CD8-positive, alpha-beta T cell (primary cell): ENCODE measurements at regions of chr2 and their contacts with region 1.

Region 1: GRCh38 chr2:7427293-7428060 is 510.3 kb downstream of the RNF144A start:
- DNase-seq: peak in 4 of 9 experiments; percentile 11 to 83 (median 57)
- ATAC-seq: peak; percentile 46
- H3K4me3 ChIP-seq: no peak overlapping the region
- H3K4me3 Mint-ChIP-seq: no peak overlapping the region
- H3K27ac ChIP-seq: peak overlapping the region in 1 of 2 experiments; percentile 37
- H3K27ac Mint-ChIP-seq: peak overlapping the region; percentile 64
- H3K4me1 ChIP-seq: peaks cover 39% of the 10 kb centered on the region
- H3K4me1 Mint-ChIP-seq: peaks cover 49% of the 10 kb centered on the region
- H3K27me3 ChIP-seq: no peaks in the 10 kb centered on the region
- H3K27me3 Mint-ChIP-seq: no peaks in the 10 kb centered on the region
- CTCF ChIP-seq: peak; percentile 94

Region 2: GRCh38 chr2:6355886-6356761 is 1071.4 kb before region 1 on chr2:
- CTCF ChIA-PET with region 1: no interaction called
- POLR2A ChIA-PET with region 1: no interaction called
- intact Hi-C with region 1: no loop called
- DNase-seq: no peak
- ATAC-seq: no peak
- H3K4me3 ChIP-seq: no peak overlapping the region
- H3K4me3 Mint-ChIP-seq: no peak overlapping the region
- H3K27ac ChIP-seq: no peak overlapping the region
- H3K27ac Mint-ChIP-seq: no peak overlapping the region
- H3K4me1 ChIP-seq: no peaks in the 10 kb centered on the region
- H3K4me1 Mint-ChIP-seq: no peaks in the 10 kb centered on the region
- H3K27me3 ChIP-seq: no peaks in the 10 kb centered on the region
- H3K27me3 Mint-ChIP-seq: no peaks in the 10 kb centered on the region
- CTCF ChIP-seq: no peak

Region 3: GRCh38 chr2:6922201-6922685 is 505.2 kb before region 1 on chr2:
- CTCF ChIA-PET with region 1: no interaction called
- POLR2A ChIA-PET with region 1: no interaction called
- intact Hi-C with region 1: no loop called
- DNase-seq: peak in 2 of 9 experiments; percentile 32 to 51
- ATAC-seq: peak; percentile 30
- H3K4me3 ChIP-seq: no peak overlapping the region
- H3K4me3 Mint-ChIP-seq: no peak overlapping the region
- H3K27ac ChIP-seq: no peak overlapping the region
- H3K27ac Mint-ChIP-seq: no peak overlapping the region
- H3K4me1 ChIP-seq: peaks cover 69% of the 10 kb centered on the region
- H3K4me1 Mint-ChIP-seq: peaks cover 81% of the 10 kb centered on the region
- H3K27me3 ChIP-seq: no peaks in the 10 kb centered on the region
- H3K27me3 Mint-ChIP-seq: no peaks in the 10 kb centered on the region
- CTCF ChIP-seq: no peak

Region 4: GRCh38 chr2:7450188-7450832 is 22.8 kb after region 1 on chr2:
- CTCF ChIA-PET with region 1: interaction called, 25 read pairs
- POLR2A ChIA-PET with region 1: interaction called, 12 read pairs
- intact Hi-C with region 1: loop called in 1 of 2 experiments (anchors 2 kb)
- DNase-seq: peak in 6 of 9 experiments; percentile 41 to 90 (median 68)
- ATAC-seq: peak; percentile 80
- H3K4me3 ChIP-seq: no peak overlapping the region
- H3K4me3 Mint-ChIP-seq: peak overlapping the region; percentile 65
- H3K27ac ChIP-seq: peak overlapping the region; percentile 51 to 81
- H3K27ac Mint-ChIP-seq: peak overlapping the region; percentile 98
- H3K4me1 ChIP-seq: peaks cover 70% of the 10 kb centered on the region
- H3K4me1 Mint-ChIP-seq: peaks cover 85% of the 10 kb centered on the region
- H3K27me3 ChIP-seq: no peaks in the 10 kb centered on the region
- H3K27me3 Mint-ChIP-seq: no peaks in the 10 kb centered on the region
- CTCF ChIP-seq: no peak

Region 5: GRCh38 chr2:7593360-7593759 is 165.9 kb after region 1 on chr2:
- CTCF ChIA-PET with region 1: interaction called, 18 read pairs
- POLR2A ChIA-PET with region 1: no interaction called
- intact Hi-C with region 1: no loop called
- DNase-seq: no peak
- ATAC-seq: no peak
- H3K4me3 ChIP-seq: no peak overlapping the region
- H3K4me3 Mint-ChIP-seq: no peak overlapping the region
- H3K27ac ChIP-seq: no peak overlapping the region
- H3K27ac Mint-ChIP-seq: no peak overlapping the region
- H3K4me1 ChIP-seq: peaks cover 7% of the 10 kb centered on the region
- H3K4me1 Mint-ChIP-seq: peaks cover 13% of the 10 kb centered on the region
- H3K27me3 ChIP-seq: no peaks in the 10 kb centered on the region
- H3K27me3 Mint-ChIP-seq: no peaks in the 10 kb centered on the region
- CTCF ChIP-seq: no peak

Region 6: DNA sequence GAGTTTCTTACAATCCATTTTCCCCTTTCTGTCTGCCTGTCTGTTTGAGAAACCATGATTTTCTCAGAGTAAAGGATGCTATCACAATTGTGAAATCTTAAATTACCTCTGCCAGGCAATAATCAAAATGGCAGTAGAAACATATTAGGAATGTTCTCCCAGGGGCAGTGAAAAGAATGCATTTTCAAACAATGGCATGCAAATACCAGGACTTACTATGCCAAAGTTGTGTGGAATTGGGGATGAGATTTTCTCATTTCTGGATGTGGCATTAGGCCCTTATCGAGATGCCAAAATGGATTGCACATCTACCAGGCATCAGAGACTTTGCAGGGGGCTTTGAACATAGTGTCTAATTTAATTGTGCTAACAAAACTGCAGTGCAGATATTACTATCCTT is 311.1 kb after region 1 on chr2:
- CTCF ChIA-PET with region 1: interaction called, 40 read pairs
- POLR2A ChIA-PET with region 1: interaction called, 5 read pairs
- intact Hi-C with region 1: loop called (anchors 1 to 5 kb)
- DNase-seq: no peak
- ATAC-seq: no peak
- H3K4me3 ChIP-seq: no peak overlapping the region
- H3K4me3 Mint-ChIP-seq: no peak overlapping the region
- H3K27ac ChIP-seq: no peak overlapping the region
- H3K27ac Mint-ChIP-seq: peak overlapping the region; percentile 45
- H3K4me1 ChIP-seq: peaks cover 3% of the 10 kb centered on the region
- H3K4me1 Mint-ChIP-seq: peaks cover 65% of the 10 kb centered on the region
- H3K27me3 ChIP-seq: no peaks in the 10 kb centered on the region
- H3K27me3 Mint-ChIP-seq: no peaks in the 10 kb centered on the region
- CTCF ChIP-seq: no peak

Region 7: DNA sequence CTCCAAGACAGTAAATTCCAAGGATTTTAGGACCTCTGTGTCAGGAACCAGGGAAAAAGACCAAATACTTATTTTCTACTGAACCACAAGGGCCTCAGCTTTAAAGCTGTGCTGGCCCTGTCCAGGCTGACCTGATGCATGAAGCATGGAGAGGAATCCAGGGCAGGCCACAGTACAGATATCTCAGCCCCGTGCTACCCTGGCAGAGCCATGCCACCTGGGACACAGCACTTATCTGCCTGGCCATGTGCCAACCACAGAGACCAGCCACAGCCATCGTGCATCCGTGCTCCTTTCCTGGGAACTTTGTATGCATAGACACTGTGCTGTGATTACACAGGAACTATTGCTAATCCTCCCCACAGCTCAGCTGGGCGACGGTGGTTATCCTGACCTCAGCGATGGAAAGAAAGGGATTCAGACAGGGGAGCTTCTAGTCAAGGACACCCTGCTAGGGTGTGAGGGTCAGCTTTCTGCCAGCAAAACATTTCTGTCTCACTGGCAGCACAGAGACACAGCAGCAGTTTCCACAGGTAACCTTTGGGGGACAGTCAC is 567.0 kb after region 1 on chr2:
- CTCF ChIA-PET with region 1: no interaction called
- POLR2A ChIA-PET with region 1: no interaction called
- intact Hi-C with region 1: loop called in 1 of 2 experiments (anchors 10 kb)
- DNase-seq: no peak
- ATAC-seq: no peak
- H3K4me3 ChIP-seq: no peak overlapping the region
- H3K4me3 Mint-ChIP-seq: no peak overlapping the region
- H3K27ac ChIP-seq: no peak overlapping the region
- H3K27ac Mint-ChIP-seq: no peak overlapping the region
- H3K4me1 ChIP-seq: no peaks in the 10 kb centered on the region
- H3K4me1 Mint-ChIP-seq: peaks cover 6% of the 10 kb centered on the region
- H3K27me3 ChIP-seq: no peaks in the 10 kb centered on the region
- H3K27me3 Mint-ChIP-seq: no peaks in the 10 kb centered on the region
- CTCF ChIP-seq: no peak

Region 8: GRCh38 chr2:8544786-8545694 is 1117.6 kb after region 1 on chr2:
- CTCF ChIA-PET with region 1: no interaction called
- POLR2A ChIA-PET with region 1: no interaction called
- intact Hi-C with region 1: loop called in 1 of 2 experiments (anchors 5 kb)
- DNase-seq: peak; percentile 21 to 90 (median 76)
- ATAC-seq: peak; percentile 87
- H3K4me3 ChIP-seq: no peak overlapping the region
- H3K4me3 Mint-ChIP-seq: no peak overlapping the region
- H3K27ac ChIP-seq: peak overlapping the region in 1 of 2 experiments; percentile 88
- H3K27ac Mint-ChIP-seq: peak overlapping the region; percentile 75
- H3K4me1 ChIP-seq: peaks cover 29% of the 10 kb centered on the region
- H3K4me1 Mint-ChIP-seq: peaks cover 40% of the 10 kb centered on the region
- H3K27me3 ChIP-seq: no peaks in the 10 kb centered on the region
- H3K27me3 Mint-ChIP-seq: no peaks in the 10 kb centered on the region
- CTCF ChIP-seq: peak; percentile 42